ENCODE measurements at regions of chr12 and their contacts with region 1.

Region 1: GRCh38 chr12:120580787-120581723 is at the start of gene POP5:
- DNase-seq: peak; percentile 72 to 93 (median 89)
- ATAC-seq: peak; percentile 97
- H3K4me3 ChIP-seq: peak within 1 kb of the TSS; percentile 99
- H3K4me3 Mint-ChIP-seq: peak within 1 kb of the TSS; percentile 95 to 99 (median 98)
- H3K27ac ChIP-seq: peak within 1 kb of the TSS; percentile 77
- H3K27ac Mint-ChIP-seq: peak within 1 kb of the TSS; percentile 81 to 97 (median 94)
- H3K4me1 ChIP-seq: peaks cover 4 to 21% of the 10 kb centered on the region in 2 donors
- H3K4me1 Mint-ChIP-seq: peaks cover 24 to 47% (median 34%) of the 10 kb centered on the region in 7 donors
- H3K27me3 ChIP-seq: no peaks in the 10 kb centered on the region
- H3K27me3 Mint-ChIP-seq: peaks cover 0 to 27% (median 7%) of the 10 kb centered on the region in 5 donors
- total RNA-seq, gene POP5: 42.9 to 86.8 (median 59.0) TPM

Region 2: GRCh38 chr12:120317224-120318105 is 263.6 kb before region 1 on chr12:
- CTCF ChIA-PET with region 1: no interaction called
- POLR2A ChIA-PET with region 1: interaction called, 3 read pairs
- intact Hi-C with region 1: loop called in 1 of 2 experiments (anchors 1 kb)
- DNase-seq: peak; percentile 100
- ATAC-seq: peak; percentile 100
- H3K4me3 ChIP-seq: peak overlapping the region; percentile 81
- H3K4me3 Mint-ChIP-seq: peak overlapping the region; percentile 86 to 95 (median 93)
- H3K27ac ChIP-seq: peak overlapping the region; percentile 87
- H3K27ac Mint-ChIP-seq: peak overlapping the region; percentile 85 to 99 (median 98)
- H3K4me1 ChIP-seq: peaks cover 5 to 10% of the 10 kb centered on the region in 2 donors
- H3K4me1 Mint-ChIP-seq: peaks cover 4 to 16% (median 14%) of the 10 kb centered on the region in 7 donors
- H3K27me3 ChIP-seq: no peaks in the 10 kb centered on the region
- H3K27me3 Mint-ChIP-seq: peaks cover 0 to 4% (median 0%) of the 10 kb centered on the region in 5 donors

Region 3: GRCh38 chr12:120469450-120470149 is 111.5 kb before region 1 on chr12 and contains the start of gene SRSF9:
- CTCF ChIA-PET with region 1: no interaction called
- POLR2A ChIA-PET with region 1: interaction called, 4 read pairs
- intact Hi-C with region 1: loop called in 1 of 2 experiments (anchors 1 kb)
- DNase-seq: peak; percentile 96 to 100 (median 97)
- ATAC-seq: peak; percentile 95
- H3K4me3 ChIP-seq: peak within 1 kb of the TSS; percentile 78
- H3K4me3 Mint-ChIP-seq: peak within 1 kb of the TSS; percentile 75 to 99 (median 90)
- H3K27ac ChIP-seq: peak within 1 kb of the TSS; percentile 86
- H3K27ac Mint-ChIP-seq: peak within 1 kb of the TSS; percentile 71 to 96 (median 86)
- H3K4me1 ChIP-seq: peaks cover 4 to 31% of the 10 kb centered on the region in 2 donors
- H3K4me1 Mint-ChIP-seq: peaks cover 34 to 65% (median 47%) of the 10 kb centered on the region in 7 donors
- H3K27me3 ChIP-seq: no peaks in the 10 kb centered on the region
- H3K27me3 Mint-ChIP-seq: peaks cover 0 to 2% (median 0%) of the 10 kb centered on the region in 5 donors
- total RNA-seq, gene SRSF9: 136 to 191 (median 145) TPM

Region 4: DNA sequence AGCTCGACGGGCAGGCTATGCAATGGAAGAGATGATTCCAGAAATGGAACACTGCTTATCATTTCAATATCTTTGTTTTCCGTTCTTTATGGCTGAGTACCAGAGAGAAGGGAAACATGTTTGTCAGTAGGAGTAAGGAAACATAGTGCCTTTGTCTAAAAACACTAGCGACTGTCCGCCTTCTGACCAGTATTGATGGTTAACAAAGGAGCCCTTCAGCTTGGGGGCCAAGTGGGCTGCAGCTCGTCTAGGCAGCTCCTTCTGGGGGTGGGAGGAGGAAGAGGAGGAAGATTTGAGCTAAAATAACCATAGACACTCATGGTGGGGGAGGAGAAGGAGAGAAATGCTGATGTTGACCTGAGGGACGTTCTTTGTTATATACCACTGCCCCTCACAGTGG is 67.1 kb before region 1 on chr12:
- CTCF ChIA-PET with region 1: no interaction called
- POLR2A ChIA-PET with region 1: no interaction called
- intact Hi-C with region 1: no loop called
- DNase-seq: no peak
- ATAC-seq: no peak
- H3K4me3 ChIP-seq: no peak overlapping the region
- H3K4me3 Mint-ChIP-seq: no peak overlapping the region
- H3K27ac ChIP-seq: no peak overlapping the region
- H3K27ac Mint-ChIP-seq: no peak overlapping the region
- H3K4me1 ChIP-seq: no peaks in the 10 kb centered on the region
- H3K4me1 Mint-ChIP-seq: no peaks in the 10 kb centered on the region
- H3K27me3 ChIP-seq: no peaks in the 10 kb centered on the region
- H3K27me3 Mint-ChIP-seq: no peaks in the 10 kb centered on the region

Region 5: GRCh38 chr12:120534203-120534702 is 46.8 kb before region 1 on chr12 and contains the start of gene RNF10:
- CTCF ChIA-PET with region 1: no interaction called
- POLR2A ChIA-PET with region 1: interaction called, 26 read pairs
- intact Hi-C with region 1: loop called (anchors 1 kb)
- DNase-seq: peak; percentile 61 to 88 (median 85)
- ATAC-seq: peak; percentile 84
- H3K4me3 ChIP-seq: peak within 1 kb of the TSS; percentile 92
- H3K4me3 Mint-ChIP-seq: peak within 1 kb of the TSS; percentile 87 to 98 (median 96)
- H3K27ac ChIP-seq: peak within 1 kb of the TSS; percentile 97
- H3K27ac Mint-ChIP-seq: peak within 1 kb of the TSS; percentile 90 to 95 (median 95)
- H3K4me1 ChIP-seq: peaks cover 34 to 40% of the 10 kb centered on the region in 2 donors
- H3K4me1 Mint-ChIP-seq: peaks cover 28 to 57% (median 54%) of the 10 kb centered on the region in 7 donors
- H3K27me3 ChIP-seq: no peaks in the 10 kb centered on the region
- H3K27me3 Mint-ChIP-seq: peaks cover 0 to 2% (median 0%) of the 10 kb centered on the region in 5 donors
- total RNA-seq, gene RNF10: 171 to 361 (median 205) TPM

Region 6: DNA sequence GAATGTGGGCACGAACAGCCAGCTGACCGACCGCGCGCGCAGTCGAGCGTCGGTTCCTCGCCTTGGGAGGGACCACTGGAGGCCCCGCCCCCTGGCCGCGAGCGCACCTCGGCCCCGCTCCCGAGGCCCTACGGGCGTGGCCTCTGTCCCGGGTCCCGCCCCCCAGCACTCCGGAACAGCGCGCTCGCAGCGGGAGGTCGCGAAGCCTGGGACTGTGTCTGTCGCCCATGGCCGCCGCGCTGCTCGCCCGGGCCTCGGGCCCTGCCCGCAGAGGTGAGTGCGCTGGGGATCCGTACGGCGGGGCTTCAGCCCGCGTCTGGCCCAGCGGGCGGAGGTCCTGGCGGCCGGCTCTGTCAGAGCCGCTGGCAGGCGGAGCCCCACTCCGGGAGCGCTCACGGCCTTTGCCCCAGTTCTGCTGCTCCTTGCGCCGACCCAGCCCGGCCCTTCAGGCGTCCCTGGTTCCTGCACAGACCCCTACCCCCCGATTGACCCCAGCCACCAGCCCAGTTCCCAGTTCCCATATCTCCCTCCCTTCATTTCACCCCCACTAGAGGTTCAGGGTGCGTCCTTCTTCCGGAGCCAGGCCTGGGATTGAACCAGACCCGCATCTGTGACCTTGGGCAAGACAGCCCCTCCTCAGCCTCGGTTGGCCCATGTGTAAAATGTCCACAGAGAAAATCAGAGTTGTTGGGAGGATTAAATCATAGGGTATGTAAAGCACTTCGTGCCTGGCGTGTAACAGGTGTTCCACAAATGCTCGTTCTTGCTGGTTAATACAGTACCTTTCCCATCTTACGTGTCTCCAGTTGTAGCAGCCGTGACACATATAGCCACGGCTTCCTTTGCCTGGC is 144.8 kb after region 1 on chr12 and contains the start of gene ACADS:
- CTCF ChIA-PET with region 1: no interaction called
- POLR2A ChIA-PET with region 1: no interaction called
- intact Hi-C with region 1: loop called (anchors 5 kb)
- DNase-seq: peak; percentile 78 to 94 (median 85)
- ATAC-seq: peak; percentile 100
- H3K4me3 ChIP-seq: peak within 1 kb of the TSS; percentile 78
- H3K4me3 Mint-ChIP-seq: peak within 1 kb of the TSS; percentile 88 to 98 (median 94)
- H3K27ac ChIP-seq: peak within 1 kb of the TSS; percentile 76
- H3K27ac Mint-ChIP-seq: peak within 1 kb of the TSS; percentile 56 to 95 (median 82)
- H3K4me1 ChIP-seq: peaks cover 12 to 13% of the 10 kb centered on the region in 2 donors
- H3K4me1 Mint-ChIP-seq: peaks cover 6 to 28% (median 23%) of the 10 kb centered on the region in 7 donors
- H3K27me3 ChIP-seq: no peaks in the 10 kb centered on the region
- H3K27me3 Mint-ChIP-seq: no peaks in the 10 kb centered on the region
- total RNA-seq, gene ACADS: 10.4 to 18.1 (median 15.7) TPM

Region 7: DNA sequence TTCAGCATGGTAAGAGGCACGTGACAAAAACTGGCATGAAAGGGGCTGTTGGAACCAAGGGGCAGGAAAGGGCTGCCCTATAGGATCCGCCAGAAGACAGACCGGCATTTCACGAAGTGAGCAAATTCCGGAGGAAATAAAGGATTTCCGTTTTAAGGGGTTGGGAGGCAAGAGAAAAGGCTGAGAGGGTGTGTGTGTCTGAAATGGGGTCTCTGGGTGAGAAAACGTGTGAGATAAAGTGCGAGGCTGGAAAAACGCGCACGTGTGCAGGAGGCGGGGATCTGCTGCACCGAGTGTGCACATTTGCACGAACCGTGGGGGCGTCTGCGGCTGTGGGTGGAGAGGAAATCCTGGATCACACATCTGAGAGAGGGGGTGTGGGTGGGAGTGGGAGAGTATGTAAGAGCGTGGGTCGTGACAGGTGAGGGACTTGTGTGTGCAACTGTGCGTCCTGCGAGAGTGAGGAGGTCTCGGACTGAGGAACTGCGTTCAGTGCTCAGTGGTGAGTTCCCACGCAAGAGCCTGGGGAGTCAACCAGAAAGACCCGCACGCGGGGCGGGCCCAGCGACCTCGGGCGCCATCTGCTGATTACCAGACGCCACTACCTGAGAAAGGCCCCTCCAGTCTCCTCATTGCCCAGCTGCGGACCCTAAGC is 514.6 kb after region 1 on chr12:
- CTCF ChIA-PET with region 1: no interaction called
- POLR2A ChIA-PET with region 1: no interaction called
- intact Hi-C with region 1: loop called (anchors 1 to 10 kb)
- DNase-seq: peak; percentile 60 to 81 (median 70)
- ATAC-seq: peak; percentile 91
- H3K4me3 ChIP-seq: peak overlapping the region; percentile 66
- H3K4me3 Mint-ChIP-seq: peak overlapping the region; percentile 81 to 95 (median 87)
- H3K27ac ChIP-seq: no peak overlapping the region
- H3K27ac Mint-ChIP-seq: peak overlapping the region in 6 of 9 donors; percentile 41 to 88 (median 69)
- H3K4me1 ChIP-seq: peaks cover 34 to 42% of the 10 kb centered on the region in 2 donors
- H3K4me1 Mint-ChIP-seq: peaks cover 28 to 56% (median 52%) of the 10 kb centered on the region in 7 donors
- H3K27me3 ChIP-seq: no peaks in the 10 kb centered on the region
- H3K27me3 Mint-ChIP-seq: peaks cover 0 to 22% (median 4%) of the 10 kb centered on the region in 5 donors

Region 8: DNA sequence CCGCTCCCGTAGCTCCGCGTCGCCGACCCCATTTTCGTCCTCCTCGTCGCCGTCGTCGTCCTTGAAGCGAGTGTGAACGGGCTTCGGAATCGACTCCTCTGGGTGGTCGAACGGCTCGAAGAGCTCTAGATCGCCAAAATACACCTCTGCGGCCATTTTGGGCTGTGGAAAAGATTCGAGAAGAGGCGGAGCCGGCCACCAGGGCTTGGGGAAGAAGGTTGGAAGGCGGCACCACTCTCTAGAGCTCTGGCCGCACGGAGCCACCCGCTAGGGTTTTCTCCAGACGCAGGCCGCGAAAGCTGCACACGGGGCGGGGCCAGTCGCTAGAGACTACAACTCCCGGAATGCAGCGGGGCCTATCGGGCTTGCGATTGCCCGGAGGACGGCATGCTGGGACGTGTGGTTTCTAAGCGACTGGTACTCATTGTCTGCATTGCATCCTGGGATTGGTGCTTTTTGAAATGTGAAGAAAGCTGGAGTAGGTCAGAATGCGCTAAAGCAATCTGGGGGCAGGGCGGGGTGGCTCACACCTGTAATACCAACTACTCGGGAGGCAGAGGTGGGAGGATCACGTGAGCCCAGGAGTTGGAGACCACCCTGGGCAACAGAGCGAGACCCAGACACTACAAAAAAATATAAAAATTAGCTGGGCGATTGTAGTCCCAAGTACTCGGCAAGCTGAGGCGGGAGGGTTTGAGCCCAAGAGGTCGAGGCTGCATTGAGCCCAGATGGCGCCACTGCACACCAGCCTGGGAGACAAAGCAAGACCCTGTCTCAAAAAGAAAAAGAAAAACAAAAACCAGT is 1919.8 kb after region 1 on chr12 and contains the start of gene ZCCHC8:
- CTCF ChIA-PET with region 1: interaction called, 3 read pairs
- POLR2A ChIA-PET with region 1: no interaction called
- intact Hi-C with region 1: loop called in 1 of 2 experiments (anchors 5 kb)
- DNase-seq: peak; percentile 83 to 97 (median 94)
- ATAC-seq: peak; percentile 96
- H3K4me3 ChIP-seq: peak within 1 kb of the TSS; percentile 97
- H3K4me3 Mint-ChIP-seq: peak within 1 kb of the TSS; percentile 83 to 99 (median 96)
- H3K27ac ChIP-seq: peak within 1 kb of the TSS; percentile 92
- H3K27ac Mint-ChIP-seq: peak within 1 kb of the TSS; percentile 89 to 98 (median 96)
- H3K4me1 ChIP-seq: peaks cover 9 to 15% of the 10 kb centered on the region in 2 donors
- H3K4me1 Mint-ChIP-seq: peaks cover 22 to 47% (median 39%) of the 10 kb centered on the region in 7 donors
- H3K27me3 ChIP-seq: no peaks in the 10 kb centered on the region
- H3K27me3 Mint-ChIP-seq: no peaks in the 10 kb centered on the region
- total RNA-seq, gene ZCCHC8: 44.4 to 54.0 (median 46.8) TPM

Measured in naive thymus-derived CD4-positive, alpha-beta T cell (primary cell).